Breast epithelium (tissue), 4 donors: ENCODE measurements at regions of chr3 and their contacts with region 1.

Region 1: DNA sequence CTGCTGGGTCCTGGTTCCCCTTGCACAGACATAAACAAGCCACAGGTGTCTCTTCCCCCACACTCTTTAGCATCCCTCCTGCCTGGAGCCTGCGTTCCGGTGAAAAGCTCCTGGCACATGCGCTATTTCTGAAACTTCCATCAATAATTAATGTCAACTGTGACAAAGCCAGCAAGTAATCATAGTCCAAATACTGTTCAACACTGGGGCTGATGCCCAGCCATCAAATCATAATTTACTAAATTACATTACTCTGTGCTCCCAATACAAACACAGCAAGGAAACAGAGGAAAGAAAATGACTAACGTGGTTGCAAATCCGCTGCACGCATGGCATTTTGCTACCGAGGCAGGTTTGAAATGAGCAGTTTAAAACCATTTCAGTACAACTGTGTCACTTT is 294.7 kb downstream of the ERC2 start:
- DNase-seq: no peak
- H3K4me3 ChIP-seq: no peak overlapping the region
- H3K27ac ChIP-seq: no peak overlapping the region
- H3K4me1 ChIP-seq: no peaks in the 10 kb centered on the region
- H3K27me3 ChIP-seq: no peaks in the 10 kb centered on the region
- CTCF ChIP-seq: no peak
- POLR2A ChIP-seq: no peak

Region 2: GRCh38 chr3:56157693-56158362 is 15.8 kb before region 1 on chr3:
- intact Hi-C with region 1: loop called (anchors 2 kb)
- DNase-seq: no peak
- H3K4me3 ChIP-seq: no peak overlapping the region
- H3K27ac ChIP-seq: no peak overlapping the region
- H3K4me1 ChIP-seq: no peaks in the 10 kb centered on the region
- H3K27me3 ChIP-seq: no peaks in the 10 kb centered on the region
- CTCF ChIP-seq: no peak
- POLR2A ChIP-seq: no peak